Ascending aorta (tissue), 2 donors: ENCODE measurements at regions of chr1 and their contacts with region 1.

Region 1: DNA sequence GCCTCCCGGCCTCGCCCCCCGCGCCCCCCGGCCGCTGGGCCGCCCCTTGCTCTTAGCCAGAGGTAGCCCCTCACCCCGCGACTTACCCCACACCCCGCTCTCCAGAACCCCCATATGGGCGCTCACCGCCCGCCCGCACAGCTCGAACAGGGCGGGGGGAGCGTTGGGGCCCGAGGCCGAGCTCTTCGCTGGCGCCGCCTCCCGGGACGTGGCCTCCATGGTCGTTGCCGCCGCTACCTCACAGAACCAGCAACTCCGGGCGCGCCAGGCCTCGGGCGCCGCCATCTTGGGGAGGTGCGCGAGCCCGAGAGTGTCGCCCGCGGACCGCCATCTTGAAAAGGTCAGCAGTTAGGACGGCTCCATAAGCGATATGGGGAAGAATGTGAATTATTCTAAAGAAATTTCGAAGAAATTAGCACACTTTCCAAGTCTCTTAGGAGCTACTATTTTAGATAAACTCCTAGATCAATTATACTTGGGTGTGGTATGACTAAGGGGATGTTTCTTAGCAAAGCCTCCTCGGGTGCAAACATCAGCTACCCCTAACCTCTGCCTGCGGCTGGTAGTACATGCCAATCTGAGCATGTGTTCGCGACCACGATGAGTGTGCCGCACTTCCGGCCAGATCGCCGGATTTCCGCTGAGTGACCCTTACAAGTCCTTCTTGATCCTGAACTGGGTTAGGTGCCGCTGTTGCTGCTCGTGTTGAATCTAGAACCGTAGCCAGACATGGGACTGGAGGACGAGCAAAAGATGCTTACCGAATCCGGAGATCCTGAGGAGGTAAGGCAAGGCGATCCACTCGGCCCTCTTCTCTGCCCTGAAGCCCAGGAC is at the starts of genes LRRC41 and UQCRH:
- DNase-seq: peak; percentile 85 to 98
- H3K4me3 ChIP-seq: peak within 1 kb of the TSS; percentile 81 to 84
- H3K27ac ChIP-seq: peak within 1 kb of the TSS; percentile 98 to 99
- H3K4me1 ChIP-seq: peaks cover 15 to 36% of the 10 kb centered on the region in 2 donors
- H3K27me3 ChIP-seq: no peaks in the 10 kb centered on the region
- CTCF ChIP-seq: no peak
- total RNA-seq, gene LRRC41: 102 TPM
- total RNA-seq, gene UQCRH: 120 TPM

Region 2: DNA sequence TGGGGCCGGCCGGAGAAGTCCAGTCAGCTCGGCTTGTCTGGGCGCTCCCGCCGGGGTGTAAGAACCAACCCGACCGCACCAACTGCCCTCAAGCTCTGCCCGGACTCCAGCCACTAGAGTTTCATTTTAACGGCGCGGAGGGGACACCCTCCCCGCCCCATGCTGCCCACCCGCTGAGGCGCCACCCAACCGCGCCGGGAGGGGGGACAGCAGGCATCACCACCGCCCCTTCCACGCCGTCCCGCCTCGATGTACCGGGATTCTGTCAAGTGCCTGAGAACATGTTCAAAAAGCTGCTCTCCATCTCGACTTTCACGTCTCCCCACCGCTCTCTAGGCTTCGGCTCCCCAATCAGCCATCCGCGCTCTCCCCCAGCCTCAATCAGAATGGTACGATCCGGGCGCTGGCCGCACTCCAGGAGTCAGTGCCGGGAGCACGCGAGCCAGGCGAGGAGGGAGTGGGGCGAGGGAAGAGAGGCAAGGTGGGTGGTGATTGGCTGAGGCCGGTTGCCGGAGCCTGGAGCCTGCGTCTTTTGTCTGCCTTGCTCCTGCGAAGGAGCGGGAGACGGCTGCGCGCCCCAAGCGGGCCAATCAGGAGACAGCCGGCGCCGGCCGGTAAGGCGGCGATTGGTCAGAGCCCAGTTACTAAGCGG is 170.6 kb before region 1 on chr1 and contains the start of gene PIK3R3:
- intact Hi-C with region 1: loop called (anchors 2 kb)
- DNase-seq: peak; percentile 90 to 99
- H3K4me3 ChIP-seq: peak within 1 kb of the TSS; percentile 71 to 83
- H3K27ac ChIP-seq: peak within 1 kb of the TSS; percentile 90 to 97
- H3K4me1 ChIP-seq: peaks cover 5 to 16% of the 10 kb centered on the region in 2 donors
- H3K27me3 ChIP-seq: no peaks in the 10 kb centered on the region
- CTCF ChIP-seq: peak in 2 of 3 experiments; percentile 10 to 18
- total RNA-seq, gene PIK3R3: 33.1 TPM

Region 3: GRCh38 chr1:46203738-46204405 is 99.4 kb before region 1 on chr1:
- intact Hi-C with region 1: loop called (anchors 2 kb)
- DNase-seq: no peak
- H3K4me3 ChIP-seq: peak overlapping the region; percentile 83 to 87
- H3K27ac ChIP-seq: peak overlapping the region; percentile 90 to 95
- H3K4me1 ChIP-seq: peaks cover 1 to 18% of the 10 kb centered on the region in 2 donors
- H3K27me3 ChIP-seq: no peaks in the 10 kb centered on the region
- CTCF ChIP-seq: no peak

Region 4: GRCh38 chr1:46247436-46248121 is 55.7 kb before region 1 on chr1 and contains the start of gene RAD54L:
- intact Hi-C with region 1: loop called (anchors 2 kb)
- DNase-seq: peak; percentile 92 to 99
- H3K4me3 ChIP-seq: peak within 1 kb of the TSS; percentile 75 to 80
- H3K27ac ChIP-seq: peak within 1 kb of the TSS; percentile 64 to 67
- H3K4me1 ChIP-seq: peaks cover 0 to 13% of the 10 kb centered on the region in 2 donors
- H3K27me3 ChIP-seq: no peaks in the 10 kb centered on the region
- CTCF ChIP-seq: no peak
- total RNA-seq, gene RAD54L: not detected

Region 5: DNA sequence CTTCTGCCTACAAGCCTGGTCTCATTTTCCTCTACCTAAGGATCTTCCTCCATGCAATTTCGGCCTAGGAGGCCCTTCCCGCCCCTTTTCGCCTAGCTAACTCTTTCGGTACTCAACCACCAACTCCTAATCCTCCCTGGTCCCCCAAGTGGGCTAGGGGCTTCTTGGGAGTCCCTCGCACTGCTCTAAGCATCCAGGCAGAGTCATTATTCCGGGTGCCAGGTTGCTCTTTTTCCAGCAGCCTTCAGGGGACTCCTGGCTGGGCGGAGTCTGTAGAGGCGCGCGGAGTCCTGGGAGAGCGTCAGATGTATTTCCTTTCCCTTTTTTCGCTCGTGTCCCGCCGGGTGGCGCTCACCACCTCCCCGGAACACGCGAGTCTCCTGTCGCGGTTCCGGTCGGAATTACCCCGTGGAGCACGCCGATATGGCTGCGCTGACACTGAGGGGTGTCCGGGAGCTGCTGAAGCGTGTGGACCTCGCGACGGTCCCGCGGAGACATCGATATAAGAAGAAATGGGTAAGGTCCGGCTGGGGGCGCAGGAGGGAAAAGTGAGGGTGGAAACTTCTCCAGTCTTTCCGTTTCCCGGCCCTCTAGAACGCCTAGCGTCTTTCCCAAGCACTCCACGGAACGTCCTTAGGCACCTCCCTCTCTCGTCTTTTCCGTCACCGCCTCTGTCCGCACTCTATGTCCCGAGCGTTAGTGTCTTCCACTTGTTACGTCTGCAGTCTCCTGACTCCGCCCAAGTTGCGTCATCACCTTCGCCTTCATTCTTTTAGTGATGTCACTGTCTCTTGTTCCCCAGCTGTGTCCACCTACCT is 37.4 kb after region 1 on chr1 and contains the start of gene NSUN4:
- intact Hi-C with region 1: loop called (anchors 1 kb)
- DNase-seq: peak; percentile 86 to 97
- H3K4me3 ChIP-seq: peak within 1 kb of the TSS; percentile 64 to 87
- H3K27ac ChIP-seq: peak within 1 kb of the TSS; percentile 98 to 99
- H3K4me1 ChIP-seq: peaks cover 0 to 12% of the 10 kb centered on the region in 2 donors
- H3K27me3 ChIP-seq: no peaks in the 10 kb centered on the region
- CTCF ChIP-seq: peak; percentile 48 to 79 (median 73)
- total RNA-seq, gene NSUN4: 6.1 TPM

Region 6: GRCh38 chr1:46372425-46372824 is 69.2 kb after region 1 on chr1:
- intact Hi-C with region 1: no loop called
- DNase-seq: no peak
- H3K4me3 ChIP-seq: no peak overlapping the region
- H3K27ac ChIP-seq: no peak overlapping the region
- H3K4me1 ChIP-seq: no peaks in the 10 kb centered on the region
- H3K27me3 ChIP-seq: no peaks in the 10 kb centered on the region
- CTCF ChIP-seq: no peak

Region 7: DNA sequence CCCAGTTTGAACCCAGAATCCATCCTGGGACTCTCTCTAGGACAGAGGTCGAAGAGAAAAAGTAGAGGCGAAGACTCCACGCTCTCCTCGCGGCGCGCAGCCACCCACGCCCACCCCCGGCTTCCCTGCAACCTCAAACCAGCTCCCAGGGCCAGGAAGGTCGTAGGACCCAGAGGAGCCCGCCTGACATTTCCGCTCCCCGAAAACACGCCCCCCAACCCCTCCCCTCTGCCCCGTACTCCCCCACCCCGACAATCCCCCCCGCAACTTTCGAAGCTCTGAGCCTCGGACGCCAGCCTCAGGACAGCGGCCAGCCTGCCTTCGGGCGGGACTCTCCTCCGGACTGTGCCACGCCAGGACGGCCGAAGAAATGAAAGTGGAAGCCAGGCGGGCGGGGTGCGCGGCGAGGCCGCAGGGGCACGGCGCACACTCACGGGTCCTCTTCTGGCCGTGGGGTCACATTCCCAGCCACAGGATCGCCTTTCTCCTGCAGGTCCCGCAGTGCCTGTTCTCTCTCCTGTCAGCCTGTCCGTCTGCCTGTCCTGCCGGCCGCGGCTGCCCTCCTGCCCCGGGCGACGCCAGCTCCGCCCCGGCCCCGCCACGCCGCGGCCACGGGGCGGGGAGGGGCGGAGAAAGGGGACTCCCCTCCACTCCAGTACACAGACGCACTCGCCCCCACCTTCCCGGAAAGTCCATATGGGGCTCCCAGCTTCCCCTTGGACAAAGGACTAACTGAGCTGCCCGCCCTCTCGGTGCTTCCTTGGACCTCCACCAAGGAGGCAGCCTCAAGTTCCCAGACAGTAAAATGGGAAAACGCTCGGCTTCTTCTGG is 313.2 kb after region 1 on chr1 and contains the start of gene MOB3C:
- intact Hi-C with region 1: loop called (anchors 10 kb)
- DNase-seq: peak; percentile 80 to 96
- H3K4me3 ChIP-seq: peak within 1 kb of the TSS; percentile 75 to 94
- H3K27ac ChIP-seq: peak within 1 kb of the TSS; percentile 89 to 90
- H3K4me1 ChIP-seq: peaks cover 32 to 44% of the 10 kb centered on the region in 2 donors
- H3K27me3 ChIP-seq: no peaks in the 10 kb centered on the region
- CTCF ChIP-seq: no peak
- total RNA-seq, gene MOB3C: 16.1 TPM

Region 8: DNA sequence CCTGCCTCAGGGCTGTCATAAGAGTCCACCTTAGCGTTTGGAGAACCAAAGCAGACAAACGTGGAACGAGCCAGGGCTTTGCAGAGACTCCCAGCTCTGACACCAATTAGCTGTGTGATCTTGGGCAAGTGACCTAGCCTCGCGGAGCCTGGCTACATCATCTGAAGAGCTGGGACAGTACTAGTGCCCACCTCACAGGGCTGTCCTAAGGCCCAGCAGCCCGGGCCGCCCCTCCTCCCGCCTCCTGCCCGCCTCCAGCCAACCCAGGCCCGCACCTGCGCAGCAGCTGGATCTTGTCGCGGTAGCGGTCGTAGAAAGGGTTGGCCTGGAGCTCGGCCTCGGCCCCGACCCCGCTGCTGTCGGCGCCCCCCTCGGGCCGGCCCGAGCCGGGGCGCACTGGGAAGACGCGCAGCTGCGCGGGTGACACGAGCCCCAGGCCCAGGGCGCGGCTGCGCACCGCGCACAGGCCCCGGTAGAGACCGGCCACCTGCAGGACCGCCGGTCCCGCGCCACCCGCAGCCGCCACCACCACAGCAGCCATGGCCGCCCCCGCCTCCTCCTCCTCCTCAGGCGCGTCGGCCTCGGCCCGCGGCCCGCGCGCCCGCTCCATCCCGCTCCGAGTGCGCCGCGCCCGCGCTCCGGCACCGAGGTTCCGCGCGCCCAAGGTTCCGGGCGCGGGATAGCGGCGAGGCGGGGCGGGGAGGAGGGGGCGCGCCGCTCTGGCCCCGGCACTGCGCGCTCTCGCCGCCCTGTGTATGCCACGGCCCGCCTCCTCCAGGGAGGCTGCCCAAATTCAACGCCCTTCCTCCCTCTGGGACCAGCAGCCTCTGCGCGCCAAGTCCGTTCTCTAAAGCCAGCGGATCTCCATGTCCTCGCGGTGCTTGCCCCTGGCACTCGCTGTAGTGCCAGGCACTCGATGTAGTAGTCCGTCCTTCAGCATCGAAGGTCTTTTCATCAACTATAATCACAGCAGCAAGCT is 364.8 kb after region 1 on chr1 and contains the start of gene ATPAF1:
- intact Hi-C with region 1: loop called (anchors 5 kb)
- DNase-seq: peak; percentile 31 to 90
- H3K4me3 ChIP-seq: peak within 1 kb of the TSS; percentile 96 to 97
- H3K27ac ChIP-seq: peak within 1 kb of the TSS; percentile 80 to 89
- H3K4me1 ChIP-seq: peaks cover 11 to 19% of the 10 kb centered on the region in 2 donors
- H3K27me3 ChIP-seq: no peaks in the 10 kb centered on the region
- CTCF ChIP-seq: no peak
- total RNA-seq, gene ATPAF1: 23.6 TPM

Region 9: GRCh38 chr1:47624531-47624930 is 1321.3 kb after region 1 on chr1:
- intact Hi-C with region 1: no loop called
- DNase-seq: peak in 1 of 2 donors; percentile 42
- H3K4me3 ChIP-seq: no peak overlapping the region
- H3K27ac ChIP-seq: no peak overlapping the region
- H3K4me1 ChIP-seq: peaks cover 0 to 12% of the 10 kb centered on the region in 2 donors
- H3K27me3 ChIP-seq: no peaks in the 10 kb centered on the region
- CTCF ChIP-seq: no peak